GM13976 (cell line): ENCODE measurements at regions of chr20 and their contacts with region 1.

Region 1: GRCh38 chr20:5788385-5788895 is 38.2 kb downstream of the SHLD1 start:
- DNase-seq: peak; percentile 81
- CTCF ChIP-seq: peak; percentile 68

Region 2: GRCh38 chr20:5569021-5569420 is 219.4 kb before region 1 on chr20:
- in situ Hi-C with region 1: loop called (anchors 10 kb)
- DNase-seq: no peak
- CTCF ChIP-seq: no peak

Region 3: GRCh38 chr20:5825130-5825719 is 36.8 kb after region 1 on chr20:
- in situ Hi-C with region 1: no loop called
- DNase-seq: no peak
- CTCF ChIP-seq: no peak